Activated CD4-positive, alpha-beta T cell treated with anti-CD3 and anti-CD28 coated beads for 36 hours (primary cell): ENCODE measurements at regions of chr1 and their contacts with region 1.

Region 1: DNA sequence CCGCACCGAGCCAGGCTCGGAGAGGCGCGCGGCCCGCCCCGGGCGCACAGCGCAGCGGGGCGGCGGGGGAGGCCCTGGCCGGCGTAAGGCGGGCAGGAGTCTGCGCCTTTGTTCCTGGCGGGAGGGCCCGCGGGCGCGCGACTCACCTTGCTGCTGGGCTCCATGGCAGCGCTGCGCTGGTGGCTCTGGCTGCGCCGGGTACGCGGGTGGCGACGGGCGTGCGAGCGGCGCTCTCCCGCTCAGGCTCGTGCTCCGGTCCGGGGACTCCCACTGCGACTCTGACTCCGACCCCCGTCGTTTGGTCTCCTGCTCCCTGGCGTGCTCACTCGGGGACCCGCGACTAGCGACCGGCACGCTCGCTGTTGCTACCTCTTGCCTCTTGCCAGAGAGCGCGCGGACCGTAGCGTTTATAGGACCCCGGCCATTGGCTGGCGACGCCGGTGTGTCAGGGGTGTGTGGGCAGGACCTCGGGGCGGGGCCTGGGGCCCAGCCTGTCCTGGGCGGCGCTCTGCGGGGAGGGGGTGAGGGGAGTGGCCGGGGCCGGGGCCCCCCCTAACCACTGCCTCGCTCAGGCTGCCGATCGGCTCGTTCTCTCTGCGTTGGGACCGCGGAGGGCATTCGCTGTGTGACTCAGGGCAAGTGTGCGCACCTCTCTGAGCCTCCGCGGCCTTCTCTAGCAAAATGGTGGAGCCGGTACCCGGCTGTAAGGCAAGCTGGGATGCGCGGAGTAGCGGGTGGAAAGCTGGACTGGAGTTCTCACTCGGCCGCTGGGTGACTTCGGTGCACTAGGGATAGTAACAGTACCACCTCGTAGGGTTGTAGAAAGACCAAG is at the start of gene SLC2A1:
- DNase-seq: peak; percentile 99
- ATAC-seq: peak; percentile 89
- H3K4me3 Mint-ChIP-seq: peak within 1 kb of the TSS; percentile 89
- H3K27ac Mint-ChIP-seq: peak within 1 kb of the TSS; percentile 97
- H3K4me1 Mint-ChIP-seq: peaks cover 47% of the 10 kb centered on the region
- H3K27me3 Mint-ChIP-seq: peaks cover 6% of the 10 kb centered on the region
- total RNA-seq, gene SLC2A1: 115 to 125 TPM

Region 2: GRCh38 chr1:41305576-41306363 is 1652.9 kb before region 1 on chr1:
- CTCF ChIA-PET with region 1: no interaction called
- POLR2A ChIA-PET with region 1: no interaction called
- intact Hi-C with region 1: no loop called
- DNase-seq: no peak
- ATAC-seq: no peak
- H3K4me3 Mint-ChIP-seq: no peak overlapping the region
- H3K27ac Mint-ChIP-seq: no peak overlapping the region
- H3K4me1 Mint-ChIP-seq: no peaks in the 10 kb centered on the region
- H3K27me3 Mint-ChIP-seq: peaks cover 10% of the 10 kb centered on the region

Region 3: DNA sequence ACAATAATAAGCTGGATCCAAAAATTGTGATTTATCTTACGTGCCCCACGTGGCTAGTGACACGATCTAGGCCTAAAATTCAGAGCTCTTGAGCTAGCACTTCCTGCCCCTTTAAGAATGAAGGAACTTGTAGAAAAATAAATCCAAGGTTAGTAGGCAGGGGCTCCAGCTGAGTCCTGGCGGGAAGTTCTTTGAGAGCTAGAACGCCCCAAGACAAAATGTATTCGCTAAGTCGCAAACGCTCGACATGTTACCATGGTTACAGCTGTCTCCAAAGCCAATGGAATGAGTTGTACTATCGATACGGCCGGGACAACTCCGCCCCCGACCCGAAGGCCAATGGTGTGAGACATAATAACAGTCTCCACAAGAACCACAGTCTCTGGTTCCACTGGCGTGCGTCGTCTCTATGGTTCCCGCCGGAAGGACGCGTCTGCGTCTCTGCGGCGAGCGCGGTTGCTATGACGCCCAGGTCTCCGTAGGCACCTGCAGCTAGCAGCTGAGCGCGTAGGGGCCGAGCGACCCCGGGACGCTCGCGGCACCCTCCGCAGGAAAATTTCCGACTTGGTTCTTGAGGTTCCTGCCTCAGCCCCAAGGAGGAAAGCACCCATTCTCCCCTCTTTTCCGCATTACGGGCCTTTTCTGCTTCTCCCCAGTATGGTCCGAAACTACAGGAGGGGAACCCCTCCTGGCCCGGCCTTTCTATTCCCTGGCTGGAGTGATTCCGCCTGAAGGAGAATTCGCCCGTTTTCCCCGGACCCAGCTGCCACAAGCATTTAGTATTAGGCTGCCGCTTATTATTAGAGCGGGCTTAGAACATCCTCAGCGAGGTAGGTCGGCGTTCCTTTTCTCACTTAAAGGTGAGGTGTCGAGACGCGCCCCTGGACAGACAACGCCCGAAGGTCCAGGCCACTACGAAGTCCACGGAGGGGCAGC is 495.6 kb before region 1 on chr1 and contains the start of gene CCDC30:
- CTCF ChIA-PET with region 1: no interaction called
- POLR2A ChIA-PET with region 1: no interaction called
- intact Hi-C with region 1: loop called in 1 of 2 experiments (anchors 1 kb)
- DNase-seq: peak; percentile 97
- ATAC-seq: peak; percentile 100
- H3K4me3 Mint-ChIP-seq: peak within 1 kb of the TSS; percentile 77
- H3K27ac Mint-ChIP-seq: peak within 1 kb of the TSS; percentile 73
- H3K4me1 Mint-ChIP-seq: peaks cover 31% of the 10 kb centered on the region
- H3K27me3 Mint-ChIP-seq: no peaks in the 10 kb centered on the region
- total RNA-seq, gene CCDC30: 1.3 to 2.3 TPM

Region 4: GRCh38 chr1:42681741-42682483 is 276.8 kb before region 1 on chr1 and contains the start of gene YBX1:
- CTCF ChIA-PET with region 1: no interaction called
- POLR2A ChIA-PET with region 1: no interaction called
- intact Hi-C with region 1: loop called in 1 of 2 experiments (anchors 1 kb)
- DNase-seq: peak; percentile 96
- ATAC-seq: peak; percentile 97
- H3K4me3 Mint-ChIP-seq: peak within 1 kb of the TSS; percentile 93
- H3K27ac Mint-ChIP-seq: peak within 1 kb of the TSS; percentile 97
- H3K4me1 Mint-ChIP-seq: peaks cover 41% of the 10 kb centered on the region
- H3K27me3 Mint-ChIP-seq: no peaks in the 10 kb centered on the region
- total RNA-seq, gene YBX1: 1,224 to 1,435 TPM

Region 5: GRCh38 chr1:42816585-42817434 is 141.9 kb before region 1 on chr1 and contains the starts of genes ERMAP and SVBP:
- CTCF ChIA-PET with region 1: no interaction called
- POLR2A ChIA-PET with region 1: interaction called, 3 read pairs
- intact Hi-C with region 1: loop called in 1 of 2 experiments (anchors 1 kb)
- DNase-seq: peak; percentile 98
- ATAC-seq: peak; percentile 90
- H3K4me3 Mint-ChIP-seq: peak within 1 kb of the TSS; percentile 77
- H3K27ac Mint-ChIP-seq: peak within 1 kb of the TSS; percentile 84
- H3K4me1 Mint-ChIP-seq: peaks cover 16% of the 10 kb centered on the region
- H3K27me3 Mint-ChIP-seq: peaks cover 2% of the 10 kb centered on the region
- total RNA-seq, gene ERMAP: 4.5 to 6.4 TPM
- total RNA-seq, gene SVBP: 14.5 to 14.6 TPM

Region 6: DNA sequence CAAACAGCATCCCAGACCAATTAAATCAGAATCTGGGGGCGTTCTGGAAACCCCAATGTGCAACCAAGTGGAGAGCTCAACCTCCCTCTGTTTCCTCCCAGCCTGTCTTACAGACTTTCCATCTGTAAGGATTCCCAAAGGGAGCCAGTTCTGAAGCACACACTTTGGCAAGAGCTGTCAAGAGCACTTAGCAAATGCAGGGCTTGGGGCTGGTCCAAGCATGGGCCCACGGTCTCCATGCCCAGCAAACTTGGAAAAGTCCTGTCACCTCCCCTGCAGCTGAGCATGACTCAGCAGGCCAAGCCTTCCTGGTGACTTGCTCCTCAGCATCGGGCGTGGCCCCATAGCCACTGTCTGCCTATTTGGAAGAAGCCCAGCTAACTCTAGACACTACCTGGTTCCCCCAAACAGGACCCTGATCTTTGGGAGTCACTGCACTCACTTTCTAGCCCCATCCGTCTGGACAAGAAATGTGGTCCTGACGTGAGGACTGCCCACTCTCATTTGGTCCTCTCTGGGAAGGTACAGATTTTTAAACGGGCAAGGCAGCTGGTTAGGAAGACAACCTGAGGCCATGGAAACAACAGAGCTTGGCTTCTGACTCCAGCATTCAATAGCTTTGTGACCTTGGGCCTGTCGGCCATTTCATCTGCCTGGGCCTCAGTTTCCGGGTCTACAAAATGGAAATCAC is 16.9 kb before region 1 on chr1:
- CTCF ChIA-PET with region 1: interaction called, 4 read pairs
- POLR2A ChIA-PET with region 1: interaction called, 20 read pairs
- intact Hi-C with region 1: loop called in 1 of 2 experiments (anchors 1 kb)
- DNase-seq: peak; percentile 55
- ATAC-seq: peak; percentile 14
- H3K4me3 Mint-ChIP-seq: no peak overlapping the region
- H3K27ac Mint-ChIP-seq: peak overlapping the region; percentile 79
- H3K4me1 Mint-ChIP-seq: peaks cover 95% of the 10 kb centered on the region
- H3K27me3 Mint-ChIP-seq: no peaks in the 10 kb centered on the region